Mammary epithelial cell (primary cell): ENCODE measurements at regions of chr3 and their contacts with region 1.

Region 1: GRCh38 chr3:195760345-195761122 is 39.8 kb downstream of the MUC20 start:
- DNase-seq: no peak
- H3K4me3 ChIP-seq: no peak overlapping the region
- H3K27ac ChIP-seq: no peak overlapping the region
- H3K4me1 ChIP-seq: no peaks in the 10 kb centered on the region
- H3K27me3 ChIP-seq: peaks cover 4% of the 10 kb centered on the region
- CTCF ChIP-seq: no peak

Region 2: GRCh38 chr3:195727606-195728195 is 32.8 kb before region 1 on chr3:
- CTCF ChIA-PET with region 1: no interaction called
- dilution Hi-C with region 1: loop called (anchors 5 kb)
- in situ Hi-C with region 1: no loop called
- intact Hi-C with region 1: no loop called
- DNase-seq: no peak
- H3K4me3 ChIP-seq: no peak overlapping the region
- H3K27ac ChIP-seq: no peak overlapping the region
- H3K4me1 ChIP-seq: no peaks in the 10 kb centered on the region
- H3K27me3 ChIP-seq: no peaks in the 10 kb centered on the region
- CTCF ChIP-seq: no peak

Region 3: DNA sequence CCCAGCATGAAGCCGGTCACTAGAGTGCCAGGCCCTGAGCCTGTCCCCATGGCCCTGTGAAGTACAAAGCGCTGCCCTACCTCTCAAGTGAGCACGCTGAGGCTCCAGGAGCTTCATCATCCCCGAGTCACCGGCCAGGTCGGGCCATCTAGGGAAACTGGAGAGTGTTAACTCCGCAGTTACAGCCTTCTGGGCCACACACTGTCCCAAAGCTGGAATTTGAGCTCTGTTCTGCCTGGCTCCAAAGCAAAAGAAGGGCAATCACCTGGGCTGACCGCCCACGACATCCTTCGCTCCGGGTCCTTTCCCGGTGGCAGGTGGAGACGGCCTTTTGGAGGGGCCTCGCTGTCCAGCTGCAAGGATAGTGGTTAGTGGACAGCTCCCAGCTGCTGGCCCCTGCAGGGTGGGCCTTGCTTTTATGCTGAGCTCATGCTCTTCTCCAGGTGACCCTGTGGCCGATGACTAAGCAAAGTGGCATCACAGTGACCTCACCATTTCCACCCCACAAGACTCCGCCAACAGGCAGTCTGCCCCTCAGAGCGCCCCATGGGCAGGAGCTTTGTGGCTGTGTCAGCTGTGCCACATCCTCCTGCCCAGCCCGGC is 54.7 kb after region 1 on chr3:
- CTCF ChIA-PET with region 1: no interaction called
- dilution Hi-C with region 1: loop called (anchors 5 kb)
- in situ Hi-C with region 1: no loop called
- intact Hi-C with region 1: no loop called
- DNase-seq: peak; percentile 30
- H3K4me3 ChIP-seq: no peak overlapping the region
- H3K27ac ChIP-seq: no peak overlapping the region
- H3K4me1 ChIP-seq: no peaks in the 10 kb centered on the region
- H3K27me3 ChIP-seq: no peaks in the 10 kb centered on the region
- CTCF ChIP-seq: no peak

Region 4: DNA sequence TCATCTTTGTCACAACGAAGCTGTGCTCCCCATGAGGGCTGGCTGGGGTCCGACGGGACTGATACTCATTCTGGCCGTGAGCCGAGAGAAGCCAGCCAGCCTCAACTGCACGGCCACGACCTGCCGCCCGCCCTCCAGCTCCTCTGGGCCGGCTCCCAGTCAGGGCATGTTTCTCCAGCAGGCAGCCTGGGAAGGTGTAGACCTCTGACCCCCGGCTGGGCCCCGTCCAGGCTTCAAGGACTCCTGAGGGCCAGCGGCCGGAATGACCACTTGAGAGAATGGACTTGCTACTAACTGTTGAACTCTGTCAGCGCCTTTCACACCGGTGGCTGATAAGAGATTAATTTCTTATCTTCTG is 69.3 kb after region 1 on chr3:
- CTCF ChIA-PET with region 1: no interaction called
- dilution Hi-C with region 1: no loop called
- in situ Hi-C with region 1: no loop called
- intact Hi-C with region 1: no loop called
- DNase-seq: no peak
- H3K4me3 ChIP-seq: no peak overlapping the region
- H3K27ac ChIP-seq: no peak overlapping the region
- H3K4me1 ChIP-seq: no peaks in the 10 kb centered on the region
- H3K27me3 ChIP-seq: peaks cover 2% of the 10 kb centered on the region
- CTCF ChIP-seq: no peak